ENCODE measurements at regions of chr2 and their contacts with region 1.

Region 1: DNA sequence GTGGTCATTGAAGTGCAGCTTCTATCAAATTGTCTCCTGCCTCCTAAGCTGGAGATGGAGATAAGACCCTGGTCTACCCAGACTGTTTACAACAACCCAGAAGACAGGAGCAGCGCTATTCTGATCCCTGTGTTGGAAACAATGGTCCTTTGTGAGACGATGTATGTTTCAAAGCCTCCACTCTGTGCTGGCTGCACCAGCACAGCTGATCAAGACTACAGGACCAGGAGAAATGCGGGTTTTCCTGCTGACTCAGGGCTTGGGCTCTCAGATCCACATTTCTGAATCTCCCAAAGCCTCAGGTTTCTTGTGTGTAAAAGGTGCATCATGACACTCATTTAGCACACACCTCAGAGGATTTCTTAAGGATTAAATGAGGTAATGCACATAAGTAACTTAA is 92.0 kb downstream of the POU3F3 start:
- DNase-seq: peak in 2 of 10 donors; percentile 42 to 45

Region 2: DNA sequence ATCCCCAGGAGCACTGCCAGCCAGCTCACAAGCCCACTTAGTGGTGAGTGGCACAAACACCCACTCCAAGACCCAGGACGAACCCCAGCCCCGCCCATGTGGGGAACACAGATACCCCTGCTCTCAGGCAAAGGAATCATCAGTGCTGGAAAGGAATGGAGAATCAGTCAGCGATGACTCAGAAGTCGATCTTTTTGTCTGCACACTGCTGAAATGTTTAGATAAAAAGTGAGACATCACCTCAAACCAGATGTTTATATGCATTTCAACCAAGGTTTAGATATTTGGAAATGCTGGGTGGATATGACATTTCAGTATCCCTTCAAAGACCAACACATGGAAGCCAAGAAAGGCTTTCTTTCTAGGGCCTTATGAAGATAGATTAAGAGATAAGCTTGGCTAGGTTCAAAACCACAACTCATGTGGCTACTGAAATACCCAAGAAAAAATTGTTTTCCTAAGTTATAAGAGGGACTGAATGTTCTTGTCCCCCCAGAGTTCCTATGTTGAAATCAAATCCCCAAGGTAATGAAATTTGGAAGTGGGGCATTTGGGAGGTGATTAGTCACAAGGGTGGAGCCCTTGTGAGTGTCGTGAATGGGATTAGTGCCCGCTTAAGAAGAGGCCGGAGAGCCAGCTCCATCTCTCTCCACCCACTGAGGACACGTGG is 48.2 kb before region 1 on chr2:
- intact Hi-C with region 1: no loop called
- DNase-seq: no peak

Region 3: DNA sequence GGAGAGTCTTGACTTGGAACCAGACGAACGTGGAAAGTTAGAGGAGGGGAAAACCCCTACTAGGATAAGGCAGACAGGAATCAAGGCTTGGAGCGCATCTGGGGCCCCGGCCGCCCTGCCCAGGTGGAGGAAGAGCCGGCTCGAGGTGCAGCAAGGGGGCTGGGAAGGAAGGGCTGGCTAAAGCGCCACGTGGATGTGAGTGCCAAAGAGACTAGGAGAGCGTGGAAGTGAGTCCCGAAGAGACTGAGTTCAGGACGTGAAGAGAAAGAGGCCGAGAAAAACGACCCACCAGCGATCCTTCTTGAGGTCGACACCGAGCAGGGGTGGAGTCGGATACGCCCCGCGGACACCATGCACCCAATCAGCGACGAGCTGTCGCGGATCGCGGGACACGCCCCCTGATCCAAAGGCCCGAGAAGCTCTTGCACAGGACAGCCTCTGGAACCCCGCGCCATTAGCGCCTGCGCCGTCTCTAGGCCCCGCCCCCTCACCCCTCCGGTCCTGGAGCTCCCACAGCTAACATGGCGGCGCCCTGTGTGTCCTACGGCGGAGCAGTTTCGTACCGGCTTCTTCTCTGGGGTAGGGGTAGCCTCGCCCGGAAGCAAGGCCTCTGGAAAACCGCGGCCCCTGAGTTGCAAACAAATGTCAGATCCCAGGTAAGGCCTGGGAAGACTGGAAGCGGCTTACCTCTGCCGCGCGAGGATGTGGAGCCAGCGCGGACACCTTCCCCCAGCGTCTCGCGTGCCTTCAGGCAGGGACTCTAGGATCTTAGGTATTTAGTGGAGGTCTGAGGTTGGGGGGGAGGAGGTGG is 91.9 kb after region 1 on chr2 and contains the start of gene MRPS9:
- intact Hi-C with region 1: loop called (anchors 5 kb)
- DNase-seq: peak; percentile 98 to 100 (median 99)